ENCODE measurements at regions of chr3 and their contacts with region 1.

Region 1: DNA sequence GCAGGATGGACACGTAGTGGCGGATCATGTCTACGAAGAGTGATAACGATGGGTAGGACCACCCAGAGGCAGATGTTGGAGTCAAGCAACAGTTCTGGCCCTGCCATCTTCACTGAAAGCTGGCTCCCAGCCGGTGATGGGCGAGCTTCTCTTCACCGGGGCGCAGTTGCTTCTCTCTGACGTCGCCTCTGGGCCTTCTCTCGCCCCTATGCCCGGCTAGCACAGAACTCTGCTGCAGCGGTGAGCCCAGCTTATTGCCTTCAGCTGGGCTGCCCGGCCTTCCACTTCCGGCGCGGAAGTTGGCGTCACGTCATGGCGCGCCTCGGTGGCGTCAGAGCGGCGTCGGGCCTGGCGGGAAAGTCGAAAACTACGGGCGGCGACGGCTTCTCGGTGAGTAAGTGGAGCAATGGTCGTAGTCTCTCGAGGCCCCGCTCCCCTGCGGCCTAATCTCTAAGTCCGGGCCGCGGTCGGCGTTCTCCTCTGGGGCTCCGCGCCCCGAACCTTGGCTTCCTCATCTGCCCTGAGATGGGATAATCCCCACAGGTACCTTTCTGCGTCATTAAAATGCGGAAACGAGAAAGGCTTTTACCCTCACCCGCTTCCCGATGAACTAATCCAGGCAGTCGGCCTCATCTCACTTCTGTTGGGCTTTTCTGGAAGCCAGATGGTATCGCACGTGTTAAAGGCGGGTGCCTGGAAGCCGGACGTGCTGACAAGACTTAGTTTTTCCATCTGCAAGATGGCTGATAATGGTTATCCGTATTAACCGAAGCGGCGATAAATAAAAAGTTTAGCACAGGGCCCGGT is at the start of gene FANCD2:
- DNase-seq: peak; percentile 90
- H3K4me3 Mint-ChIP-seq: peak within 1 kb of the TSS; percentile 98
- H3K27ac Mint-ChIP-seq: peak within 1 kb of the TSS; percentile 99
- H3K4me1 Mint-ChIP-seq: peaks cover 33% of the 10 kb centered on the region
- H3K27me3 Mint-ChIP-seq: no peaks in the 10 kb centered on the region
- total RNA-seq, gene FANCD2: 63.4 and 64.2 TPM in 2 replicates

Region 2: DNA sequence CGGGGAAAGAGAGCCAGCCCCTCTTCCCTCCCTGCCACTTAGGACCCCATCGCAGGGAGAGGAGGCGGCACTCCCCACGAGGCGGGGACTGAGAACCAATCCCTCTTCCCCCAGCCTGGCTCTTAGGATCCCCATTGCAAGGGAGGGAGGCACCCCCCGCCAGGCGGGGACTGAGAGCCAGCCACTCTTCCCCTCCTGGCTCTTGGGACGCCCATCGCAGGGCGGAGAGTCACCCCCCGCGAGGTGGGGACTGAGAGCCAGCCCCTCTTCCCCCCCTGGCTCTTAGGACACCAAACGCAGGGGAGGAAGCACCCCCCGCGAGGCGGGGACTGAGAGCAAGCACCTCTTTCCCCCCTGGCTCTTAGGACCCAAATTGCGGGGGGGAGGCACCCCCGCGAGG is 1347.5 kb before region 1 on chr3:
- intact Hi-C with region 1: no loop called
- DNase-seq: no peak
- H3K4me3 Mint-ChIP-seq: no peak overlapping the region
- H3K27ac Mint-ChIP-seq: no peak overlapping the region
- H3K4me1 Mint-ChIP-seq: peaks cover 4% of the 10 kb centered on the region
- H3K27me3 Mint-ChIP-seq: no peaks in the 10 kb centered on the region

Region 3: GRCh38 chr3:9552252-9552999 is 473.9 kb before region 1 on chr3:
- intact Hi-C with region 1: no loop called
- DNase-seq: peak; percentile 23
- H3K4me3 Mint-ChIP-seq: no peak overlapping the region
- H3K27ac Mint-ChIP-seq: no peak overlapping the region
- H3K4me1 Mint-ChIP-seq: no peaks in the 10 kb centered on the region
- H3K27me3 Mint-ChIP-seq: peaks cover 23% of the 10 kb centered on the region

Region 4: DNA sequence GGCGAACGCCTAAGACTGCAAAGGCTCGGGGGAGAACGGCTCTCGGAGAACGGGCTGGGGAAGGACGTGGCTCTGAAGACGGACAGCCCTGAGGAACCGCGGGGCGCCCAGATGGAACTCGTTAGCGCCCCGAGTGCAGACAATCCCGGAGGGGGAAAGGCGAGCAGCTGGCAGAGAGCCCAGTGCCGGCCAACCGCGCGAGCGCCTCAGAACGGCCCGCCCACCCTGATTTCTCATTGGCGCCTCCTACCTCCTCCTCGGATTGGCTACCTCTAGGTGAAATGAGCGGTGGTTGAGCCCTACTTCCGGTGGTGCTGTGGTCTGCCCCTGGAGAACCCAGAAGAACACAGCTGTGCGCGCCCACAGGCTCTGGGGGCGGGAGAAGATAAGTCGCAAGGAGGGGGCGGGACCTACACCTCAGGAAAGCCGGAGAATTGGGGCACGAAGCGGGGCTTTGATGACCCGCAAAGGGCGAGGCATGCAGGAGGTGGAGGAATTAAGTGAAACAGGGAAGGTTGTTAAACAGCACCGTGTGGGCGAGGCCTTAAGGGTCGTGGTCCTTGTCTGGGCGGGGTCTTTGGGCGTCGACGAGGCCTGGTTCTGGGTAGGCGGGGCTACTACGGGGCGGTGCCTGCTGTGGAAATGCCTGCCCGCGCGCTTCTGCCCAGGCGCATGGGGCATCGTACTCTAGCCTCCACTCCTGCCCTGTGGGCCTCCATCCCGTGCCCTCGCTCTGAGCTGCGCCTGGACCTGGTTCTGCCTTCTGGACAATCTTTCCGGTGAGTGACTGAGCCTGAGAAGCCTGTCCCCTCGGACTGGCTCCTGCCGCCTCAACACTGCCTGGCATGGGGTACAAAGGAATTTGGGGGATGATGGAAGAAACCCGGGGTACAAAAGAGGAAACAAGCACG is 276.4 kb before region 1 on chr3 and contains the start of gene OGG1:
- intact Hi-C with region 1: loop called (anchors 1 kb)
- DNase-seq: peak; percentile 96
- H3K4me3 Mint-ChIP-seq: peak within 1 kb of the TSS; percentile 96
- H3K27ac Mint-ChIP-seq: peak within 1 kb of the TSS; percentile 95
- H3K4me1 Mint-ChIP-seq: peaks cover 61% of the 10 kb centered on the region
- H3K27me3 Mint-ChIP-seq: no peaks in the 10 kb centered on the region
- total RNA-seq, gene OGG1: 40.2 and 40.6 TPM in 2 replicates

Region 5: DNA sequence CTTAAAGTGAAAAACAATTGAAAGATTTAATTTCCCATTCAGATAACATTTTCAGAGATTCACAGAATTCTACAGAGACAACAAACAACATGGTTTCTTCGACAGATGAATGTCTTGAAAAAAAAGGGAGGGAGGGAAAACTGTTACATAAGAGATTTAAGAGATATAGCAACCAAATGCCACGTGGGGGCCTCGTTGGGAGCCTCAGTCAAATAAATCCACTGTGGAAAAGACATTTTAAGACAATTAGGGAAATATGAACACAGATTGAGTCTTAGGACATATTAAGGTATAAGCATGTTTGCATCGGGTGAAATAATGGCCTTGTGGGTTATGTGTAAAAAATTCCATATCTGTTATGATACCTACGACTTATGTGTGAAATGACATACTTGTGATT is 69.1 kb before region 1 on chr3:
- intact Hi-C with region 1: no loop called
- DNase-seq: no peak
- H3K4me3 Mint-ChIP-seq: no peak overlapping the region
- H3K27ac Mint-ChIP-seq: no peak overlapping the region
- H3K4me1 Mint-ChIP-seq: no peaks in the 10 kb centered on the region
- H3K27me3 Mint-ChIP-seq: no peaks in the 10 kb centered on the region

Region 6: DNA sequence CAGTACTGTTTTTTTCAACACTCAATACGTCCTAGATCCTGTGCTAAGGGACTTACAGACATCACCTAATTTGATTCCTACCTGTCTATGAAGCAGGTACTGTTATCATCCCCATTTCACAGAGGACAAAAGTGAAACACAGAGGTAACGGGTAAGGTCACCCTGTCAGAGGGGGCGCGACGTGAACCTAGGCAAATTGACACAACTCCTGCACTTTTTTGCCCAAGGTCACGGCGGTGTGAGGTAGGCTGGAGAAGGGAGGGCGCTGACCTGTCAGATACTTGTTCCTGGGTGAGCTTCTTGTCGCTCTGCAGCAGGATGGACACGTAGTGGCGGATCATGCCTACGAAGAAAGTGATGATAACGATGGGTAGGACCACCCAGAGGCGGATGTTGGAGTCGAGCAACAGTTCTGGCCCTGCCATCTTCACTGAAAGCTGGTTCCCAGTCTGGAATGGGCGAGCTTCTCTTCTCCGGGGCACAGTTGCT is 40.0 kb before region 1 on chr3:
- intact Hi-C with region 1: loop called (anchors 1 kb)
- DNase-seq: no peak
- H3K4me3 Mint-ChIP-seq: peak overlapping the region; percentile 97
- H3K27ac Mint-ChIP-seq: peak overlapping the region; percentile 98
- H3K4me1 Mint-ChIP-seq: peaks cover 27% of the 10 kb centered on the region
- H3K27me3 Mint-ChIP-seq: no peaks in the 10 kb centered on the region

Region 7: GRCh38 chr3:10142707-10143566 is 116.7 kb after region 1 on chr3:
- intact Hi-C with region 1: loop called (anchors 2 kb)
- DNase-seq: no peak
- H3K4me3 Mint-ChIP-seq: peak overlapping the region; percentile 90
- H3K27ac Mint-ChIP-seq: peak overlapping the region; percentile 85
- H3K4me1 Mint-ChIP-seq: peaks cover 25% of the 10 kb centered on the region
- H3K27me3 Mint-ChIP-seq: no peaks in the 10 kb centered on the region

Region 8: DNA sequence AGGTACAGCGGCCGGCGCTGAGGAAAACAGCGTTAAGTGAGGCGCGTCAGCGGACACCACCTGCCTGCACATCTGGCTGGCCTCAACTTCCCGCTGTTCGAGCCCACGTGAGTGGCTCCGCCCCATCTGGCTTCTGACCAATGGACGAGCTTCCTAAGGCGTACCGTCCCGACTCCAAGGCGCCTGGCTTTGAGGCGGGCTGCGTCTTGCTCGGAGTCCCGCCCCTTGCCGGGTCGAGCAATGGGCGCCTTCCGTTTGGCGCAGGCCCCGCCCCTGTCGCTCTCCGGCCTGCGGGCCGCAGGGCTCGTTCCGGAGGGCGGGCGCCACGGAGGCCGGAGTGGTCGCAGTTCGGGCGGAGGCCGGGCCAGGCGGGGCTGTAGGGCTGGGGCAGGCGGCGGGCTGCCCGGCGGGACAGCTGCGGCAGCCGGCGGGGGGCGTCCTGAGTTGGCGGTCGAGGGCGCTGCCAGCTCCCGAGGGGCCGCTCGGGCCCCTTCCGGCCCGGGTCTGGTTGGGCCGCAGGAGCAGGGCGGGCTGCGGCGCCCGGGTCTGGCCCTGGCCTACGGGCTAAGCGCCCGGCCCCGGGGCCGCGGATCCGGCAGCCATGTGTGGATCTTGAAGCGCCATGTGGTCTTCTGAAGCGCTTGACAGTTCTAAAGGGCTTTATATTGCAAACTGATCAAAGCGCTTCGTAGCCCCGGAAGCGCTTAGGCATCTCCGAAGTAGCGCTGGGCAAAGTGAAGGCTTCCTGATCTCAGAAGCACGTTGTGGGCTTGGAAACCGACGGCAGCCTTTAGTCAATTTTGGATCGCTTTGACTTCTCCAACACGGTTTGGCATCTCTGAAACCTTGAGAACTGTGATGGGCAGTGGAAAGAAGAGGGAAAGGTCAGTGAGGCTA is 222.1 kb after region 1 on chr3 and contains the start of gene TATDN2:
- intact Hi-C with region 1: loop called (anchors 1 kb)
- DNase-seq: peak; percentile 93
- H3K4me3 Mint-ChIP-seq: peak within 1 kb of the TSS; percentile 97
- H3K27ac Mint-ChIP-seq: peak within 1 kb of the TSS; percentile 97
- H3K4me1 Mint-ChIP-seq: peaks cover 62% of the 10 kb centered on the region
- H3K27me3 Mint-ChIP-seq: no peaks in the 10 kb centered on the region
- total RNA-seq, gene TATDN2: 80.4 and 81.5 TPM in 2 replicates

Region 9: GRCh38 chr3:10344147-10344943 is 318.1 kb after region 1 on chr3:
- intact Hi-C with region 1: no loop called
- DNase-seq: peak; percentile 25
- H3K4me3 Mint-ChIP-seq: no peak overlapping the region
- H3K27ac Mint-ChIP-seq: no peak overlapping the region
- H3K4me1 Mint-ChIP-seq: no peaks in the 10 kb centered on the region
- H3K27me3 Mint-ChIP-seq: no peaks in the 10 kb centered on the region